ENCODE measurements at regions of chr13 and their contacts with region 1.

Region 1: GRCh38 chr13:74930402-74931165 is 551.4 kb downstream of the TBC1D4 start:
- DNase-seq: no peak
- ATAC-seq: no peak
- H3K4me3 Mint-ChIP-seq: no peak overlapping the region
- H3K27ac Mint-ChIP-seq: no peak overlapping the region
- H3K4me1 Mint-ChIP-seq: no peaks in the 10 kb centered on the region
- H3K27me3 Mint-ChIP-seq: no peaks in the 10 kb centered on the region
- CTCF ChIP-seq: no peak

Region 2: DNA sequence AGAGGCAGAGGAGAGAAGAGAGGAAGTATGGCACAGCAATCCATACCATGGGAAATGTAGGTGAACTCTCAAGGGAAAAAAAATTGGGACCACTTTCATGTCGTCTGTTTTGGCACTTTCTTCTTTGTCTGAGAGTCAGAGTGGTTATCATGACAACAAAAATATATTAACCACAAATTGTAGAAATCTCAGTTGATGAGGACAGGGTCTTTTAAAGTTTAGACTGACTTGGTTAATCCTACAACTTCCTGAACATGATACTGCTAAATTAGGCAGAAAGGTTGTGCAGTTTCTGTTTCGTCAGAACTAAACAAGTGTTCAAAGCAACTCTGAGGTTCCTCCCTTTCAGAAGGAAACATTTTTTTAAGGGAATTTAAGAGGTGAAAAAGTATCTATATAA is 1856.5 kb before region 1 on chr13:
- CTCF ChIA-PET with region 1: no interaction called
- POLR2A ChIA-PET with region 1: interaction called, 10 read pairs
- DNase-seq: no peak
- ATAC-seq: no peak
- H3K4me3 Mint-ChIP-seq: no peak overlapping the region
- H3K27ac Mint-ChIP-seq: no peak overlapping the region
- H3K4me1 Mint-ChIP-seq: peaks cover 58% of the 10 kb centered on the region
- H3K27me3 Mint-ChIP-seq: peaks cover 13% of the 10 kb centered on the region
- CTCF ChIP-seq: no peak

Region 3: GRCh38 chr13:74778946-74779345 is 151.6 kb before region 1 on chr13:
- CTCF ChIA-PET with region 1: no interaction called
- POLR2A ChIA-PET with region 1: no interaction called
- DNase-seq: no peak
- ATAC-seq: no peak
- H3K4me3 Mint-ChIP-seq: no peak overlapping the region
- H3K27ac Mint-ChIP-seq: no peak overlapping the region
- H3K4me1 Mint-ChIP-seq: peaks cover 26% of the 10 kb centered on the region
- H3K27me3 Mint-ChIP-seq: no peaks in the 10 kb centered on the region
- CTCF ChIP-seq: no peak